Psoas muscle (tissue), 8 donors: ENCODE measurements at regions of chr9 and their contacts with region 1.

Region 1: GRCh38 chr9:33320568-33321261 is 30.4 kb downstream of the NFX1 start:
- DNase-seq: no peak
- ATAC-seq: peak; percentile 85 to 90 (median 88)
- H3K4me3 ChIP-seq: no peak overlapping the region
- H3K27ac ChIP-seq: peak overlapping the region; percentile 65
- H3K4me1 ChIP-seq: peaks cover 18% of the 10 kb centered on the region
- H3K27me3 ChIP-seq: no peaks in the 10 kb centered on the region
- CTCF ChIP-seq: no peak

Region 2: GRCh38 chr9:33260372-33260771 is 60.3 kb before region 1 on chr9:
- intact Hi-C with region 1: no loop called
- DNase-seq: no peak
- ATAC-seq: no peak
- H3K4me3 ChIP-seq: no peak overlapping the region
- H3K27ac ChIP-seq: peak overlapping the region; percentile 83
- H3K4me1 ChIP-seq: peaks cover 34% of the 10 kb centered on the region
- H3K27me3 ChIP-seq: no peaks in the 10 kb centered on the region
- CTCF ChIP-seq: no peak

Region 3: GRCh38 chr9:33272061-33272460 is 48.7 kb before region 1 on chr9:
- intact Hi-C with region 1: loop called in 1 of 2 experiments (anchors 5 kb)
- DNase-seq: no peak
- ATAC-seq: peak in 1 of 4 donors; percentile 51
- H3K4me3 ChIP-seq: no peak overlapping the region
- H3K27ac ChIP-seq: no peak overlapping the region
- H3K4me1 ChIP-seq: no peaks in the 10 kb centered on the region
- H3K27me3 ChIP-seq: no peaks in the 10 kb centered on the region
- CTCF ChIP-seq: no peak